BJ (cell line): ENCODE measurements at regions of chr4 and their contacts with region 1.

Region 1: DNA sequence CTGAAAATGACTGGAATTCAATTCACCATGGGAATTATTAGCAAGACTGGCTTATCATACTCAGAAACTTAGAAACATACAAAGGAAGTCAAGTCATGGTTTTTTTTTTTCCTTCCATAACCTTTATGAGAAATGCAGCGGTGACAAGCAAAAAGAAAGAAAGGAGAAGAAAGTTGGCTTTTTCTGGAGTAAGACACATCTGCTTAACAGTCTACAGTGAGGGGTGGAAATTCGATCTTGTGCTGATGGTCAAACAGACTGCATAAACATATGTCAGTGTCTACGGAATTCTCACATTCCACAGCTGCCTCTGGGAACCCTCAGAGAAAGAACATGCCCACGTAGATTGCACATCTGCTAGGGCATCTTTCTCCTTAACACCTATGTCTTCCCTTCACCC is 54.6 kb downstream of the PROM1 start:
- DNase-seq: no peak
- H3K4me3 ChIP-seq: no peak overlapping the region
- H3K27me3 ChIP-seq: no peaks in the 10 kb centered on the region; the same call in 1 of the 2 replicates
- CTCF ChIP-seq: no peak

Region 2: GRCh38 chr4:16264798-16265197 is 235.5 kb after region 1 on chr4:
- CTCF ChIA-PET with region 1: interaction called, 17 read pairs
- POLR2A ChIA-PET with region 1: interaction called, 4 read pairs
- DNase-seq: no peak
- H3K4me3 ChIP-seq: no peak overlapping the region
- H3K27me3 ChIP-seq: 0 out of 2 replicates have a peak, but pooled peaks cover 1% of the 10 kb centered on the region
- CTCF ChIP-seq: peak; percentile 50